SK-N-SH (cell line): ENCODE measurements at regions of chr7 and their contacts with region 1.

Region 1: DNA sequence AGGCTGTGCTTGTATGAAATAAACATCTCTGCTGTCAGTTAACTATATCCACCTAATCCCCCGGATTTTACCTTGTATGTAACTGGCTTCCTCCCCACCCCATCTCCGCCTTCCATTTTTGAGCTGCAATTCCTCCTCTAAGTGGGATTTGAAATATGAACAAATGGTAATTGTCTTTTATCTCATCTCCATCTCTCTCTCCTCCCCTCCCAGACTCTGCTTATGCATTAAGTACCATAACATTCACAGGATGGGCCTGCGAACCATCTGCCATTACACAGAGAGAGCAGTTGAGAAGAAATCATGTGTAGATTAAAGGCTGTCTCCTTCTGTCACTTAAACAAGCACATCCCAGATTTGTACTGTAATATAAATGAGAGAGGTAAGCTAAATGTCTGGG is 1169.9 kb downstream of the TYW1 start:
- DNase-seq: peak; percentile 87
- H3K4me3 ChIP-seq: no peak overlapping the region
- H3K27ac ChIP-seq: peak overlapping the region in 1 of 2 experiments; percentile 58; a peak in 2 of 4 replicates
- H3K4me1 ChIP-seq: peaks cover 0 to 2% of the 10 kb centered on the region in 2 experiments; a peak in 1 of 4 replicates
- H3K27me3 ChIP-seq: no peaks in the 10 kb centered on the region
- CTCF ChIP-seq: no peak
- EP300 ChIP-seq: peak in 1 of 2 experiments; percentile 96; a peak in 2 of 4 replicates
- RAD21 ChIP-seq: peak; percentile 47; the same call in 1 of the 2 replicates

Region 2: DNA sequence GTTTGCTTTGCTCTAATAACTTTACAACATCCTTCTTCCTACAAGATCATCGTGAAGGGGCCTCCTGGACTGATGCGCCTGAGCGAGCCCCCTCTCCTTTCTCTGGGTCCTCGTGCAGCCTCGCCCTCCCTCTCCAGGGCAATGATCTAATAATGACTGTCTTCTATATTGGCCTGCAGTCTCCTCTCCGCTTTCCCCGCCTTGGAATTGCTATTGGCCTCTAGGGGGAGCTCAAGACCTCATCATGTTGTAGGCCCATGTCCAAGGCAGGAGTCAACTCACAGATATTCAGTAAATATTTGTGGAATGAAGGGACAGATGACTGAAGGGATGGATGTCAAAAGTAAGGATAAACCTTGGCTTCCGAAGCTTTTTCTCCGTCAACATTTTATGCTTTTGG is 10.4 kb after region 1 on chr7:
- CTCF ChIA-PET with region 1: interaction called, 16 read pairs
- POLR2A ChIA-PET with region 1: interaction called, 4 read pairs
- DNase-seq: peak; percentile 79
- H3K4me3 ChIP-seq: peak overlapping the region in 1 of 2 experiments; percentile 18; a peak in 1 of 4 replicates
- H3K27ac ChIP-seq: no peak overlapping the region
- H3K4me1 ChIP-seq: no peaks in the 10 kb centered on the region
- H3K27me3 ChIP-seq: no peaks in the 10 kb centered on the region
- CTCF ChIP-seq: peak; percentile 70
- EP300 ChIP-seq: 0 out of 4 replicates have a peak, but pooled peaks of 1 of the 2 experiments have one; percentile 18
- RAD21 ChIP-seq: peak; percentile 88

Region 3: DNA sequence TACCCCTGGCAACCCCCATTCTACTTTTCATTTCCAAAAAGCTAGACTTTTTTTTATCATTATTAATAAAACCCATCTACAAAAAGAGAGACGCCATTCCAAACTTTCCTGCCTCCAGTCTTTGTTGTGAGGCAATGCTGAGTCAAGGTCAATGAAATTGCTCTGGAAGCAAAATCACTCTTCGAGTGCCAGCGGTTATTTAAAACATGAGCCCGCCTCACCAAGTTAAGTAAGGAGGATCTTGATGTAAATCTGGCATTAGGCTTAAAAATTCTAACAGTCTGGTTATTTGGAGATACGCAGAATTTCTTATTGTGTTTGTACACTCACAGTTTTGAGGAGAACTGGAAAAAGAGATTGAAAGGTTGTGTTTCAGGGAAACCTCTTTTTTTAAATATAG is 26.4 kb after region 1 on chr7:
- CTCF ChIA-PET with region 1: no interaction called
- POLR2A ChIA-PET with region 1: no interaction called
- DNase-seq: no peak
- H3K4me3 ChIP-seq: no peak overlapping the region
- H3K27ac ChIP-seq: no peak overlapping the region
- H3K4me1 ChIP-seq: no peaks in the 10 kb centered on the region
- H3K27me3 ChIP-seq: no peaks in the 10 kb centered on the region
- CTCF ChIP-seq: no peak
- EP300 ChIP-seq: no peak
- RAD21 ChIP-seq: no peak